ENCODE measurements at regions of chr17 and their contacts with region 1.

Region 1: GRCh38 chr17:43200127-43200526 is 11.5 kb upstream of the TMEM106A start:
- DNase-seq: no peak
- ATAC-seq: no peak
- H3K4me3 ChIP-seq: no peak overlapping the region
- H3K4me3 Mint-ChIP-seq: no peak overlapping the region
- H3K27ac ChIP-seq: no peak overlapping the region
- H3K27ac Mint-ChIP-seq: no peak overlapping the region
- H3K4me1 ChIP-seq: no peaks in the 10 kb centered on the region
- H3K4me1 Mint-ChIP-seq: no peaks in the 10 kb centered on the region
- H3K27me3 ChIP-seq: no peaks in the 10 kb centered on the region
- H3K27me3 Mint-ChIP-seq: no peaks in the 10 kb centered on the region
- CTCF ChIP-seq: no peak

Region 2: GRCh38 chr17:43211480-43212402 is 11.6 kb after region 1 on chr17 and contains the start of gene TMEM106A:
- CTCF ChIA-PET with region 1: interaction called, 14 read pairs
- POLR2A ChIA-PET with region 1: interaction called, 10 read pairs
- intact Hi-C with region 1: no loop called
- DNase-seq: peak; percentile 50 to 89 (median 76)
- ATAC-seq: peak; percentile 92
- H3K4me3 ChIP-seq: peak within 1 kb of the TSS; percentile 82 to 95
- H3K4me3 Mint-ChIP-seq: peak within 1 kb of the TSS; percentile 98
- H3K27ac ChIP-seq: peak within 1 kb of the TSS; percentile 75 to 82
- H3K27ac Mint-ChIP-seq: peak within 1 kb of the TSS; percentile 96
- H3K4me1 ChIP-seq: peaks cover 25% of the 10 kb centered on the region
- H3K4me1 Mint-ChIP-seq: peaks cover 40% of the 10 kb centered on the region
- H3K27me3 ChIP-seq: no peaks in the 10 kb centered on the region
- H3K27me3 Mint-ChIP-seq: no peaks in the 10 kb centered on the region
- CTCF ChIP-seq: peak; percentile 58
- total RNA-seq, gene TMEM106A: 8.9 to 9.2 TPM